Transverse colon (tissue), 4 donors: ENCODE measurements at regions of chr11 and their contacts with region 1.

Region 1: DNA sequence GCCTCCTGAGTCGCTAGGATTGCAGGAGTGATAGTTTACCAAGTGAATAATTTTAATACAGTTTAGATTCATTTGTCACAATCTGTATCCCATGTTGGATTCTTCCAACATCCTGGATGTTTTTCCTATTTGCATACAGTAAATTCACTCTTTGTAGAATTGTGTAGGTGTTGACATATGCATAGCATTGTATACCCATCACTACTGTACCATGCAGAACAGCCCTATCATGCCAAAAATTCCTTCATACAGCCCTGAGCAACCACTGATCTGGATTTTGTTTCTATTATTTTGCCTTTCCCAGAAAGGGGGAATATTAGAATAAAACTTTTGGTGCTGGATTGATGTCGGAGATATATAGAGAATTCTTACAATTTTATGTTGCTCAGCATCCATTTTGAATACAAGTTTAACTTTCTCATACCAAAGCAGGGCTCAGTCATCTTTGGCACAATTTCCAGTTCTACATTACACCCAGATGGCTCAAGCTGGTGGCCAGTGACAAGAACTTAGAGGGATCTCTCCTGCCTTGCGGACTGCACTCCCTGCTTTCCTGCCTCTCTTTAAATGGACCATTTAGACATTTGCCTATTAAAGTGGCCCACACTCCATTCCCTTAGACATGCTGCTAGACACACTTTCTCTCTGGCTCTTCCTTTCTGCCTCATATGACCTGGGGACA is 45.4 kb upstream of the CFAP300 start:
- DNase-seq: no peak
- H3K4me3 ChIP-seq: no peak overlapping the region
- H3K27ac ChIP-seq: no peak overlapping the region
- H3K4me1 ChIP-seq: peaks cover 0 to 4% (median 3%) of the 10 kb centered on the region in 4 donors
- H3K27me3 ChIP-seq: no peaks in the 10 kb centered on the region
- CTCF ChIP-seq: no peak
- EP300 ChIP-seq: no peak
- POLR2A ChIP-seq: no peak

Region 2: GRCh38 chr11:101860696-101861427 is 140.9 kb before region 1 on chr11:
- in situ Hi-C with region 1: loop called (anchors 5 to 25 kb)
- intact Hi-C with region 1: loop called (anchors 5 kb)
- DNase-seq: peak; percentile 29
- H3K4me3 ChIP-seq: no peak overlapping the region
- H3K27ac ChIP-seq: no peak overlapping the region
- H3K4me1 ChIP-seq: no peaks in the 10 kb centered on the region
- H3K27me3 ChIP-seq: no peaks in the 10 kb centered on the region
- CTCF ChIP-seq: peak; percentile 70 to 85 (median 71)
- EP300 ChIP-seq: no peak
- POLR2A ChIP-seq: no peak

Region 3: GRCh38 chr11:101944923-101945322 is 56.9 kb before region 1 on chr11:
- in situ Hi-C with region 1: no loop called
- intact Hi-C with region 1: no loop called
- DNase-seq: no peak
- H3K4me3 ChIP-seq: no peak overlapping the region
- H3K27ac ChIP-seq: no peak overlapping the region
- H3K4me1 ChIP-seq: no peaks in the 10 kb centered on the region
- H3K27me3 ChIP-seq: no peaks in the 10 kb centered on the region
- CTCF ChIP-seq: no peak
- EP300 ChIP-seq: no peak
- POLR2A ChIP-seq: no peak